Endothelial cell of umbilical vein (primary cell): ENCODE measurements at regions of chr14 and their contacts with region 1.

Region 1: GRCh38 chr14:33792720-33793368 is 158.0 kb downstream of the EGLN3 start:
- DNase-seq: peak; percentile 80
- H3K4me3 ChIP-seq: peak overlapping the region in 1 of 3 experiments; percentile 30
- H3K27ac ChIP-seq: no peak overlapping the region
- H3K4me1 ChIP-seq: peaks cover 25% of the 10 kb centered on the region
- H3K27me3 ChIP-seq: no peaks in the 10 kb centered on the region
- CTCF ChIP-seq: peak; percentile 89 to 91
- POLR2A ChIP-seq: no peak

Region 2: GRCh38 chr14:32588448-32589320 is 1204.2 kb before region 1 on chr14:
- CTCF ChIA-PET with region 1: interaction called, 26 read pairs
- POLR2A ChIA-PET with region 1: no interaction called
- dilution Hi-C with region 1: no loop called
- intact Hi-C with region 1: no loop called
- DNase-seq: peak; percentile 36
- H3K4me3 ChIP-seq: no peak overlapping the region
- H3K27ac ChIP-seq: no peak overlapping the region
- H3K4me1 ChIP-seq: no peaks in the 10 kb centered on the region
- H3K27me3 ChIP-seq: peaks cover 2 to 6% of the 10 kb centered on the region in 2 experiments
- CTCF ChIP-seq: peak; percentile 45 to 54
- POLR2A ChIP-seq: no peak

Region 3: DNA sequence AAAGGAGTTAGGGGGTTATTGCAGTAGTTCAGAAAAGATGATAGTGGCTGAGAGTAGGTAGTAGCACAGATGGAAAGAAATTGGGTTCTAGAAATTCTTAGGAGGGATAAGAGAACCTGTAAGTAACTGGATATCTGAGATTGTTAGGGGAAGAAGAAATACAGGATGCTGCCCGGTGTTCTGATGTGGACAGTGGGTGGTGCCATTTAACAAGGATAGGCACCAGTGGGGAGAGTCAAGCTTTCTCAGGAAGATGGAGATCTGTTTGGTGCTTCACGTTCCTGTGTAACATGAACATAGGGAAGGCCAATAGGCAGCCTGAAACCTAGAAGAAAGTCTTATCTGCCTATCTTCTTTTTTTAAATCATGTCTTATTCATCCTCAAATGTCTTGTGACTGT is 608.3 kb before region 1 on chr14:
- CTCF ChIA-PET with region 1: interaction called, 8 read pairs
- POLR2A ChIA-PET with region 1: no interaction called
- dilution Hi-C with region 1: no loop called
- intact Hi-C with region 1: loop called (anchors 1 kb)
- DNase-seq: peak; percentile 14
- H3K4me3 ChIP-seq: no peak overlapping the region
- H3K27ac ChIP-seq: no peak overlapping the region
- H3K4me1 ChIP-seq: no peaks in the 10 kb centered on the region
- H3K27me3 ChIP-seq: no peaks in the 10 kb centered on the region
- CTCF ChIP-seq: no peak
- POLR2A ChIP-seq: no peak

Region 4: GRCh38 chr14:33457021-33457420 is 335.8 kb before region 1 on chr14:
- CTCF ChIA-PET with region 1: interaction called, 5 read pairs
- POLR2A ChIA-PET with region 1: no interaction called
- dilution Hi-C with region 1: loop called (anchors 25 kb)
- intact Hi-C with region 1: no loop called
- DNase-seq: no peak
- H3K4me3 ChIP-seq: no peak overlapping the region
- H3K27ac ChIP-seq: no peak overlapping the region
- H3K4me1 ChIP-seq: no peaks in the 10 kb centered on the region
- H3K27me3 ChIP-seq: peaks cover 0 to 1% of the 10 kb centered on the region in 2 experiments
- CTCF ChIP-seq: no peak
- POLR2A ChIP-seq: no peak

Region 5: GRCh38 chr14:33564774-33565630 is 227.8 kb before region 1 on chr14:
- CTCF ChIA-PET with region 1: interaction called, 23 read pairs
- POLR2A ChIA-PET with region 1: no interaction called
- dilution Hi-C with region 1: no loop called
- intact Hi-C with region 1: loop called (anchors 1 kb)
- DNase-seq: peak; percentile 98
- H3K4me3 ChIP-seq: peak overlapping the region in 1 of 3 experiments; percentile 16
- H3K27ac ChIP-seq: peak overlapping the region; percentile 100
- H3K4me1 ChIP-seq: peaks cover 69% of the 10 kb centered on the region
- H3K27me3 ChIP-seq: no peaks in the 10 kb centered on the region
- CTCF ChIP-seq: no peak
- POLR2A ChIP-seq: peak; percentile 19

Region 6: GRCh38 chr14:33676135-33676566 is 116.7 kb before region 1 on chr14:
- CTCF ChIA-PET with region 1: interaction called, 59 read pairs
- POLR2A ChIA-PET with region 1: no interaction called
- dilution Hi-C with region 1: loop called (anchors 25 kb)
- intact Hi-C with region 1: loop called (anchors 2 kb)
- DNase-seq: peak; percentile 26
- H3K4me3 ChIP-seq: no peak overlapping the region
- H3K27ac ChIP-seq: no peak overlapping the region
- H3K4me1 ChIP-seq: peaks cover 20% of the 10 kb centered on the region
- H3K27me3 ChIP-seq: no peaks in the 10 kb centered on the region
- CTCF ChIP-seq: peak; percentile 17 to 29
- POLR2A ChIP-seq: no peak

Region 7: GRCh38 chr14:33859306-33859705 is 66.5 kb after region 1 on chr14:
- CTCF ChIA-PET with region 1: no interaction called
- POLR2A ChIA-PET with region 1: no interaction called
- dilution Hi-C with region 1: no loop called
- intact Hi-C with region 1: no loop called
- DNase-seq: no peak
- H3K4me3 ChIP-seq: no peak overlapping the region
- H3K27ac ChIP-seq: no peak overlapping the region
- H3K4me1 ChIP-seq: no peaks in the 10 kb centered on the region
- H3K27me3 ChIP-seq: peaks cover 0 to 3% of the 10 kb centered on the region in 2 experiments
- CTCF ChIP-seq: no peak
- POLR2A ChIP-seq: no peak